ENCODE measurements at regions of chr2 and their contacts with region 1.

Region 1: GRCh38 chr2:195318440-195319111 is 338.4 kb upstream of the SLC39A10 start:
- DNase-seq: peak in 7 of 9 donors; percentile 11 to 57 (median 53)
- ATAC-seq: peak; percentile 57
- H3K4me3 ChIP-seq: no peak overlapping the region
- H3K4me3 Mint-ChIP-seq: no peak overlapping the region
- H3K27ac ChIP-seq: no peak overlapping the region
- H3K27ac Mint-ChIP-seq: no peak overlapping the region
- H3K4me1 ChIP-seq: no peaks in the 10 kb centered on the region
- H3K4me1 Mint-ChIP-seq: peaks cover 0 to 35% (median 18%) of the 10 kb centered on the region in 7 donors
- H3K27me3 ChIP-seq: no peaks in the 10 kb centered on the region
- H3K27me3 Mint-ChIP-seq: no peaks in the 10 kb centered on the region

Region 2: DNA sequence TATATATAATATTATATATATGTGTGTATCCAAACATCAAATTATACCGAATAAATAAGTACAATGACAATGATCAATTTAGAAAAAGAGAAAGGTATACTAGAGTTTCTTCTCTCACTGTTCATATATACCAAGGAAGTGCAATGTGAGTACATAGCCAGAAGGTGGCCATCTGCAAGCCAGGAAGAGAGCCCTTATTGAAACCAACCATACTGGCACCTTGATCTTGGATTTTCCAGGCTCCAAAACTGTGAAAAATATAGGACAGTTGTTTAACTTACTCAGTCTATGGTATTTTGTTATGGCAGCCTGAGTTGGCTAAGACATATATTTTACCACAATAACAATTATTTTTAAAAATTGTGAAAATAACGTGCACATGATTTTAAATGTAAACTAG is 1151.8 kb before region 1 on chr2:
- CTCF ChIA-PET with region 1: no interaction called
- POLR2A ChIA-PET with region 1: no interaction called
- intact Hi-C with region 1: loop called (anchors 1 kb)
- DNase-seq: peak in 2 of 9 donors; percentile 6 to 16
- ATAC-seq: no peak
- H3K4me3 ChIP-seq: no peak overlapping the region
- H3K4me3 Mint-ChIP-seq: no peak overlapping the region
- H3K27ac ChIP-seq: no peak overlapping the region
- H3K27ac Mint-ChIP-seq: no peak overlapping the region
- H3K4me1 ChIP-seq: no peaks in the 10 kb centered on the region
- H3K4me1 Mint-ChIP-seq: no peaks in the 10 kb centered on the region
- H3K27me3 ChIP-seq: no peaks in the 10 kb centered on the region
- H3K27me3 Mint-ChIP-seq: peaks cover 0 to 5% (median 0%) of the 10 kb centered on the region in 5 donors

Region 3: DNA sequence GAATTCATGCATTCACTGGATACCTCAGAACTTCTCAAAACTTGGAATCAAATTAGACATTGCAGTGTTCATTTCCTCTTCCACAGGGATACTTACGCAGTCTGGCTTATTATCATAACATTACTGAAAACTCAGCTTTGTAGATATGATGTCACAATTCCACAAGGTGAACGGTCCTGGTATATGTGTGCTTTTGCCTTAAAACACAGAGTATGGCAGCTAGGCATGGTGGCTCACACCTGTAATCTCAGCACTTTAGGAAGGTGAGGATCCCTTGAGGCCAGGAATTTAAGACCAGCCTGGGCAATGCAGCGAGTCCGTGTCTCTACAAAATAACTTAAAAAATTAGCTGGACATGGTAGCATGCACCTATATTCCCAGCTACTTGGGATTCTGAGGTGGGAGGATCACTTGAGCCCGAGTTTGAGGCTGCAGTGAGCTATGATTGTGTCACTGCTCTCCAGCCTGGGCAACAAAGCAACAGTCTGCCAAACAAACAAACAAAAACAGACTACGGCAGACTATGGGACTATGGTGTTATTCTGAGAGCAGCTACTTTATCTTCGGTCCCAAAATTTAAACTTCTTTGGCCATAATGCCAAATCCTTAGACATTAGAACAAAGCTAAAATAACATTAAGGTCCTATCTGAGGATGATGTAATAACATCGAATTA is 853.5 kb before region 1 on chr2:
- CTCF ChIA-PET with region 1: no interaction called
- POLR2A ChIA-PET with region 1: no interaction called
- intact Hi-C with region 1: loop called in 1 of 2 experiments (anchors 5 kb)
- DNase-seq: peak in 2 of 9 donors; percentile 11 to 25
- ATAC-seq: no peak
- H3K4me3 ChIP-seq: no peak overlapping the region
- H3K4me3 Mint-ChIP-seq: no peak overlapping the region
- H3K27ac ChIP-seq: no peak overlapping the region
- H3K27ac Mint-ChIP-seq: no peak overlapping the region
- H3K4me1 ChIP-seq: no peaks in the 10 kb centered on the region
- H3K4me1 Mint-ChIP-seq: no peaks in the 10 kb centered on the region
- H3K27me3 ChIP-seq: no peaks in the 10 kb centered on the region
- H3K27me3 Mint-ChIP-seq: no peaks in the 10 kb centered on the region

Region 4: GRCh38 chr2:194545978-194546377 is 772.6 kb before region 1 on chr2:
- CTCF ChIA-PET with region 1: no interaction called
- POLR2A ChIA-PET with region 1: no interaction called
- intact Hi-C with region 1: loop called (anchors 1 to 2 kb)
- DNase-seq: no peak
- ATAC-seq: no peak
- H3K4me3 ChIP-seq: no peak overlapping the region
- H3K4me3 Mint-ChIP-seq: no peak overlapping the region
- H3K27ac ChIP-seq: no peak overlapping the region
- H3K27ac Mint-ChIP-seq: no peak overlapping the region
- H3K4me1 ChIP-seq: no peaks in the 10 kb centered on the region
- H3K4me1 Mint-ChIP-seq: no peaks in the 10 kb centered on the region
- H3K27me3 ChIP-seq: no peaks in the 10 kb centered on the region
- H3K27me3 Mint-ChIP-seq: peaks cover 0 to 8% (median 0%) of the 10 kb centered on the region in 5 donors

Region 5: GRCh38 chr2:194985258-194985657 is 333.3 kb before region 1 on chr2:
- CTCF ChIA-PET with region 1: no interaction called
- POLR2A ChIA-PET with region 1: no interaction called
- intact Hi-C with region 1: no loop called
- DNase-seq: no peak
- ATAC-seq: no peak
- H3K4me3 ChIP-seq: no peak overlapping the region
- H3K4me3 Mint-ChIP-seq: no peak overlapping the region
- H3K27ac ChIP-seq: no peak overlapping the region
- H3K27ac Mint-ChIP-seq: no peak overlapping the region
- H3K4me1 ChIP-seq: no peaks in the 10 kb centered on the region
- H3K4me1 Mint-ChIP-seq: no peaks in the 10 kb centered on the region
- H3K27me3 ChIP-seq: no peaks in the 10 kb centered on the region
- H3K27me3 Mint-ChIP-seq: no peaks in the 10 kb centered on the region

Measured in naive thymus-derived CD4-positive, alpha-beta T cell (primary cell).